ENCODE measurements at regions of chr5 and their contacts with region 1.

Region 1: DNA sequence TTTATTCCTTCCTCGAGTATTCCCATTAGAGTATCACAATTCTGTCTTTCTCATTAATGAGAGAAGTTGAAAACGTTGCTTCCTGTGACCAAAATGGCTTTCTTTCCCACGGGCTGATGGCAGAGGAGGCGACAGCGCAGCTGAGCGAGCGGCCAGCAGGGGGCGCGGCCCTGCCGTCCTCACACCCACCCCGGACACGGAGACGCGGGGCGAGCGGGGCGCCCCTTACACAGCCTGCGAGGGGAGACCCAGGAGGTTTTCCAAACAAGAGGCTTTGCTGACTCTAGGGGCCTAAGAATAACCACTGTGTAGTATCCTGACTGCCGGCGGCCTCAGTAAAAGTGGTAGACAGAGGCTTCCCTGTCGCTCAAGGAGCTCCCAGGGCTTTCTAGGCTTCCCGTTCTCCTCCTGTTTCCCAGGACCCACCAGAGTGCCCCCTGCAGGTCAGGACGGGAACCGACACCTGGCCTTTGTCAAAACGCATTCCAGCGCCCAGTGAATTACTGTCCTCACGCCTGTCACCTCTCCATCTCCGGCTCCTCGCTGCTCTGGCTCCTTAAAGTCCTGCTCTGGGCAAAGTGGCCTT is 27.3 kb upstream of the FGF1 start:
- DNase-seq: peak; percentile 90
- H3K4me3 ChIP-seq: peak overlapping the region in 2 of 3 experiments; percentile 39 to 44
- H3K27ac ChIP-seq: peak overlapping the region; percentile 43
- H3K4me1 ChIP-seq: peaks cover 11% of the 10 kb centered on the region
- H3K27me3 ChIP-seq: peaks cover 0 to 5% of the 10 kb centered on the region in 2 experiments
- CTCF ChIP-seq: peak; percentile 83 to 98
- POLR2A ChIP-seq: no peak

Region 2: DNA sequence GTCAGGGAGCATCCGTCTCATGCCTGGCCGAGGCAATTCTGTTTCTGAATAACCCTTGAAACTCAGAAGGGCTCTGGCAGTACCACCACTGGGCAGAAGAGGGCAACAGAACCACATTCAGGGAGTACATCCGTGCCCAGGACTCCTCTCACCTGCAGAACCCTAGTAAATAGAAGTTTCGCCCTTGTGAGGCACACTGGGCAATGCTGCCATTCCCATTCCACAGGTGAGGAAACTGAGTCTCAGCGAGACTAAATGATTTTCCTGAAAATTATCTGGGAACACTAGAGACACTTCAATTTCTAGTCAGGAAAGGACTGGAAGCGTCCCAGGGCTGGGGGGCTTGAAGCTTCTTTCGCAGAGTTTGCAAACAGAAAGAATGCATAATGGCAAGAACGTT is 102.1 kb before region 1 on chr5:
- CTCF ChIA-PET with region 1: interaction called, 36 read pairs
- POLR2A ChIA-PET with region 1: no interaction called
- dilution Hi-C with region 1: no loop called
- intact Hi-C with region 1: loop called (anchors 1 kb)
- DNase-seq: peak; percentile 74
- H3K4me3 ChIP-seq: no peak overlapping the region
- H3K27ac ChIP-seq: no peak overlapping the region
- H3K4me1 ChIP-seq: no peaks in the 10 kb centered on the region
- H3K27me3 ChIP-seq: peaks cover 2 to 27% of the 10 kb centered on the region in 2 experiments
- CTCF ChIP-seq: peak; percentile 87 to 90
- POLR2A ChIP-seq: no peak

Region 3: DNA sequence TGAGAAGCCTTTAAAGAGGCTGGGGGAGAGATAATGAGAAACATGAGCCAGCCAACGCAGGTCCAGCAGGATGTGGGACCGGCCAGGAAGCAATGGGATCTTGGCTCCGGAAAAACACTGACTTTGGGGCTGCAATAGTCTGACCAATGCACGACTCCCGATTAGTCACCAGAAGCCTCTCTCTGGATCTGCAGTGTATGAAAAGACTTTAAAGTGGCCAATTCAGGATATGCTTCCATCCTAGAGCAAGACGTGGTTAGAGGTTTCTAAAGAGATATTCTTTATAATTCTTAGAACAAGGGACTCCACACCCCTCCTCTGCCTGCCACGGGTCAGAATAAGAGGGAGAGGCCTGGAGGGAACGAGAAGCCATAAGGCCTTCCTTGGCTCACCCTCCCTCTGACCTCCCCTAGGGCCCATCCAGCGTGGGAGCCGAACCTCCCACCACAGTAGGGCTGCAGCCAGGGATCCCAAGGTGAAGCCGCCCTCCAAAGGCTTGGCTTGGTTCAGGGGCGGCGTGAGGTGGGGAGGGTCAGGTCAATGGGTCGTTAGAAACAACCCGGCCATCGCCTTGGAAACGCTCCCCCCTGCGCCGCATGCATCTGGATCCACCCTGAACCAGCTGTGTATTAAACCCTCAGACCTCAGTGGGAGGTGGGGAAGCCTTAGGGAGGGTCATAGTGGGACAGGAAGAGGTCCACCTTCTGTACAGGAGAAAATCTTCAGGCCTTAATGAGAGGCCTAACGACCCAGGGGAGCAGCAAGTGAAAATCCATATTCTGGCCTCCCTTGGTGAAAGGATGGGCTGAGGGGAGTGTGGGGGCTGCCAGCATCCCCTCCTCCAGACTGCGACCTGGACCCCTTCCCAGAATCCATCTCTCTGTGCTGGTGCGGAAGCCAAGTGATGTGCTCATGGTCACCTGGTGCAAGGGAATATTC is 38.4 kb before region 1 on chr5:
- CTCF ChIA-PET with region 1: interaction called, 12 read pairs
- POLR2A ChIA-PET with region 1: no interaction called
- dilution Hi-C with region 1: no loop called
- intact Hi-C with region 1: no loop called
- DNase-seq: peak; percentile 59
- H3K4me3 ChIP-seq: no peak overlapping the region
- H3K27ac ChIP-seq: no peak overlapping the region
- H3K4me1 ChIP-seq: peaks cover 8% of the 10 kb centered on the region
- H3K27me3 ChIP-seq: peaks cover 21 to 28% of the 10 kb centered on the region in 2 experiments
- CTCF ChIP-seq: no peak
- POLR2A ChIP-seq: no peak

Region 4: DNA sequence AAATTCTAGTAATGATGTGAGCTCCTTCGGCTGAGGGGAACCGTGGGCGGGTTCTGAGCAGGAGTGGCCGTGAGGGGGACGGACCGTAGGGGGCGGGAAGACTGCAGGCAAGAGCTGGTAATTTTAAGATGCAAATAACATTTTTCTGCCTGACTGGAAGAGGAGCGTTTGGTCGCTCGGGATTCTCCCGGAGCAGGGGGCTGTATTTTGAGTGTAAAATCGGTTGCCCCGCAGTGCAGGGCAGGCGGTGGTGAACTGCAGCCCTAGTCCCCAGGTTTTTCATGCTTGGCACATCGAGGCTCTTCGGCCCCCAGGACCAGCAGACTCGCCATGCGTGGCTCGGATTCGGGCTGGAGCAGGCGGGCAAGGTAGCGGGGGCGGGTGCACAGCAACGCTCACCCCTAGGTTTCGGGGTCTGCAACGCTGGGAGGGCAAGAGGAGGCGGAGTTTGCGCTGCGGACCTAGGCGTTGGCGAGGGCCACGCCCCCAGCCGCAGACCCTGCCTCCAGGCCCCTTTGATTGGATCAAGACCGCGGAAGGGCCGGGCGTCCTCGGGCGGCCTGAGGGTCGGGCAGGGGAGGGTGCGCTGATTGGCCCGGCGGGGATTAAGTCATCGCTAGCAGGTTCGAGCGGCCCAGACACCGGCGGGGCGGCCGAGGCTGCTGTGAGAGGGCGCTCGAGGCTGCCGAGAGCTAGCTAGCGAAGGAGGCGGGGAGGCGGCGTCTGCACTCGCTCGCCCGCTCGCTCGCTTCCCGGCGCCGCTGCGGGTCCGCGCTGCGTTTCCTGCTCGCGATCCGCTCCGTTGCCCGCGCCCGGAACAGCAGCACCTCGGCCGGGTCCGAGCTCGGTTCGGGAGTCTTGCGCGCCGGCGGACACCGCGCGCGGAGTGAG is 56.8 kb after region 1 on chr5 and contains the start of gene ARHGAP26:
- CTCF ChIA-PET with region 1: interaction called, 46 read pairs
- POLR2A ChIA-PET with region 1: no interaction called
- dilution Hi-C with region 1: no loop called
- intact Hi-C with region 1: loop called (anchors 1 kb)
- DNase-seq: peak; percentile 98
- H3K4me3 ChIP-seq: peak within 1 kb of the TSS; percentile 49 to 86 (median 74)
- H3K27ac ChIP-seq: peak within 1 kb of the TSS; percentile 33
- H3K4me1 ChIP-seq: peaks cover 10% of the 10 kb centered on the region
- H3K27me3 ChIP-seq: no peaks in the 10 kb centered on the region
- CTCF ChIP-seq: peak in 1 of 2 donors; percentile 61
- POLR2A ChIP-seq: peak; percentile 70
- total RNA-seq, gene ARHGAP26: 13.9 and 16.2 TPM in 2 replicates

Region 5: DNA sequence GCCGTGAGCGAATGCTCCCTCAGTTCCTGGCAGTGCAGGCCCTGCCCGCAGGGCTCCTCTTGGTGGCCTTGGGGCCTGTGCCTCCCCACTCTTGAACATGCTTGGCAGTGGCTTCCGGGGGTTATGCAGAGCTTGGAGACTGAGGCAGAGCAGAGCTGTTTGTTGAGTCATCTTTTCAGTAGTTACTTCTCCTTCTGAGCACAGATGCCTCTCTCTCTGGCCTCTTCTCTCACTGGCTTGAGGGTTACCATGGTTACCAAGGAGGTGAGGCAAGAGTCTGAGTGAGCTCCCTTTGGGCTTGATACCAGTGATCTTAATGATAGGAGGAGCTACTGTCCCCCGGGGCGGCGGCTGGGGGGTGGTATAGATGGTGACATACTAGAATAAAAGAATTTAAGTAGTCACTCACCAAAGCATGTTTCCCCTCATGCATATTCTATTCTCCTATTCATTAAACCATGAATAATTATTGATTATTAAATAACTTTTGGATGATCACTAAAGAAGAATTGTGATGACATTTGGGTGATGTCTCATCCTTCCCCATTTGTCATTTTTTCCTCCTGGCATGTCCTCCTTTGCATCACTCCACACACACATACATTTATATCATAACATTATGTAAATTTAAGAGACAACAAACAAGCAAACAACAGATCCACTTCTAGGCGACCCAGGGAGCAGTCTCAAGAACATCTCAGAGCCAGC is 168.0 kb after region 1 on chr5:
- CTCF ChIA-PET with region 1: interaction called, 1,173 read pairs
- POLR2A ChIA-PET with region 1: no interaction called
- dilution Hi-C with region 1: loop called (anchors 25 kb)
- intact Hi-C with region 1: loop called (anchors 1 kb)
- DNase-seq: no peak
- H3K4me3 ChIP-seq: no peak overlapping the region
- H3K27ac ChIP-seq: no peak overlapping the region
- H3K4me1 ChIP-seq: peaks cover 18% of the 10 kb centered on the region
- H3K27me3 ChIP-seq: no peaks in the 10 kb centered on the region
- CTCF ChIP-seq: no peak
- POLR2A ChIP-seq: no peak

Region 6: GRCh38 chr5:142959683-142960657 is 246.8 kb after region 1 on chr5:
- CTCF ChIA-PET with region 1: interaction called, 4 read pairs
- POLR2A ChIA-PET with region 1: no interaction called
- dilution Hi-C with region 1: no loop called
- intact Hi-C with region 1: loop called (anchors 1 kb)
- DNase-seq: peak; percentile 36
- H3K4me3 ChIP-seq: no peak overlapping the region
- H3K27ac ChIP-seq: no peak overlapping the region
- H3K4me1 ChIP-seq: peaks cover 2% of the 10 kb centered on the region
- H3K27me3 ChIP-seq: no peaks in the 10 kb centered on the region
- CTCF ChIP-seq: no peak
- POLR2A ChIP-seq: no peak

Measured in endothelial cell of umbilical vein (primary cell).